ENCODE measurements at regions of chr20 and their contacts with region 1.

Region 1: GRCh38 chr20:54293520-54293921 is 85.6 kb downstream of the PFDN4 start:
- DNase-seq: no peak
- H3K4me3 ChIP-seq: no peak overlapping the region
- H3K27ac ChIP-seq: peak overlapping the region; percentile 48 to 66
- H3K4me1 ChIP-seq: no peaks in the 10 kb centered on the region
- H3K27me3 ChIP-seq: no peaks in the 10 kb centered on the region
- CTCF ChIP-seq: no peak
- POLR2A ChIP-seq: no peak

Region 2: GRCh38 chr20:55830121-55830827 is 1536.8 kb after region 1 on chr20:
- intact Hi-C with region 1: loop called (anchors 10 kb)
- DNase-seq: no peak
- H3K4me3 ChIP-seq: no peak overlapping the region
- H3K27ac ChIP-seq: no peak overlapping the region
- H3K4me1 ChIP-seq: no peaks in the 10 kb centered on the region
- H3K27me3 ChIP-seq: no peaks in the 10 kb centered on the region
- CTCF ChIP-seq: no peak
- POLR2A ChIP-seq: no peak